ENCODE measurements at regions of chr4 and their contacts with region 1.

Region 1: DNA sequence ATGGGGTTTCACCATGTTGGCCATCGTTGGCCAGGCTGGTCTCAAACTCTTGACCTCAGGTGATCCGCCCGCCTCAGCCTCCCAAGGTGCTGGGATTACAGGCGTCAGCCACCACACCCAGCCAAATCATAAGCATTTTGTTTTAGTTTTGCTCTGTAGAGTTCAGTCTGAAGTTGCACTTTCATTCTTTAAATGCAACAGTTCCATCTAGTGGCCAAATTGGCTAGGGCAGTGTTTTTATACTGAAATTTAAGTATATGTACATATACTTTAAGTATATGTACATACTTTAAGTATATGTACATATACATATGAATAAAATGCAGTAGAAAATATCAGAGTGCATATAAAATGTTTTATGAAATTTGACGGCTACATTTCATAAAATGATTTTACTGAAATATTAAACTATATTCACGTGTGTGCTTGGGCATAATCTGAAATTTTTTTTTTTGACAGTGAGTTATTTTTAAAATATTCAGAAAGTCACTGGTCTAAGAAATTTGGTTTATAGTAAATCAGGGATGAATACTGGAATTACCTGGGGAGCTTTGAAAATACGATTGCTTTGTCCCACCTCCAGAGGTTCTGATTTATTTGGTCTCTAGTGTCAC is 145.5 kb downstream of the NWD2 start:
- DNase-seq: peak; percentile 61
- H3K4me3 ChIP-seq: no peak overlapping the region
- H3K27ac ChIP-seq: no peak overlapping the region
- H3K4me1 ChIP-seq: no peaks in the 10 kb centered on the region
- H3K27me3 ChIP-seq: no peaks in the 10 kb centered on the region
- CTCF ChIP-seq: peak; percentile 39 to 53
- POLR2A ChIP-seq: no peak

Region 2: GRCh38 chr4:36351082-36351666 is 1038.9 kb before region 1 on chr4:
- CTCF ChIA-PET with region 1: no interaction called
- POLR2A ChIA-PET with region 1: no interaction called
- dilution Hi-C with region 1: no loop called
- intact Hi-C with region 1: loop called (anchors 1 kb)
- DNase-seq: peak; percentile 37
- H3K4me3 ChIP-seq: no peak overlapping the region
- H3K27ac ChIP-seq: no peak overlapping the region
- H3K4me1 ChIP-seq: no peaks in the 10 kb centered on the region
- H3K27me3 ChIP-seq: no peaks in the 10 kb centered on the region
- CTCF ChIP-seq: peak; percentile 36 to 40
- POLR2A ChIP-seq: no peak